Stomach (tissue), 19 donors: ENCODE measurements at regions of chr10 and their contacts with region 1.

Region 1: DNA sequence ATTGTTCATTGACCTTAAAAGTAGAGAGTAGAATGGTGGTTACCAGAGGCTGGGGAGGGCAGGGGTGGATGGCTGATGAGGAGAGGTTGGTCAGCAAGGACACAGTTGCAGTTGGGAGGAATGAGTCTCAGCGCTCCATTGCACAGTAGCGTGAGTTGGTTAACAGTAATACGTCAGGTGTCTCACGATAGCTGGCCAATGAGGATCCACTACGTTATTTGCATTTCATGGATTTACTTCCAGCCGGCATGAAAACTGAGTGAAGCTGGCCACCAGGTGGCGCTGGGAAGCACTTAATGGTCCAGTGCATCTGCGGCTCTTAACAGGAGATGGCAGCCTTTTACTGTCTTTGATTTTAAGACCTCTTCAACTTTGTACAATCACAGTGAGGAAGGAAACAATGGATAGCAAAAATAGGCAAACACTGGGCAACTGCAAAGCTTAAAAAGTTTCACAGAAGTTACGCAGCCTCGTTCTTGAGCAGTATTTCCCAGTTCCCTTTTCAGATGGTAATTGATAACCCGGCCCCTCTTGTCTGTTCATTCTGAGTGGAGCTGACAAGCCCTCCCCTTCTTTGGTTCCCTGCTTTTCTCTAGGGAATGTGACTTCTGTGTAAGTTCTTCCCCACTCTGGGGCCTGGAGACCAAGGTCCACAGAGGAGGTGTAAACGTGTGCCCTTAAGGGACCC is 23.7 kb downstream of the AKR1E2 start:
- DNase-seq: peak; percentile 96 to 97
- H3K4me3 ChIP-seq: no peak overlapping the region
- H3K27ac ChIP-seq: peak overlapping the region; percentile 39 to 82 (median 72)
- H3K4me1 ChIP-seq: peaks cover 16 to 48% (median 33%) of the 10 kb centered on the region in 4 donors
- H3K27me3 ChIP-seq: no peaks in the 10 kb centered on the region
- CTCF ChIP-seq: peak in 6 of 7 experiments; percentile 91 to 100 (median 97)
- EP300 ChIP-seq: no peak
- POLR2A ChIP-seq: peak in 1 of 4 donors; percentile 11

Region 2: GRCh38 chr10:5081091-5081490 is 231.4 kb after region 1 on chr10:
- intact Hi-C with region 1: no loop called
- DNase-seq: peak in 1 of 2 donors; percentile 18
- H3K4me3 ChIP-seq: no peak overlapping the region
- H3K27ac ChIP-seq: no peak overlapping the region
- H3K4me1 ChIP-seq: peaks cover 0 to 19% (median 7%) of the 10 kb centered on the region in 4 donors
- H3K27me3 ChIP-seq: no peaks in the 10 kb centered on the region
- CTCF ChIP-seq: no peak
- EP300 ChIP-seq: no peak
- POLR2A ChIP-seq: no peak

Region 3: DNA sequence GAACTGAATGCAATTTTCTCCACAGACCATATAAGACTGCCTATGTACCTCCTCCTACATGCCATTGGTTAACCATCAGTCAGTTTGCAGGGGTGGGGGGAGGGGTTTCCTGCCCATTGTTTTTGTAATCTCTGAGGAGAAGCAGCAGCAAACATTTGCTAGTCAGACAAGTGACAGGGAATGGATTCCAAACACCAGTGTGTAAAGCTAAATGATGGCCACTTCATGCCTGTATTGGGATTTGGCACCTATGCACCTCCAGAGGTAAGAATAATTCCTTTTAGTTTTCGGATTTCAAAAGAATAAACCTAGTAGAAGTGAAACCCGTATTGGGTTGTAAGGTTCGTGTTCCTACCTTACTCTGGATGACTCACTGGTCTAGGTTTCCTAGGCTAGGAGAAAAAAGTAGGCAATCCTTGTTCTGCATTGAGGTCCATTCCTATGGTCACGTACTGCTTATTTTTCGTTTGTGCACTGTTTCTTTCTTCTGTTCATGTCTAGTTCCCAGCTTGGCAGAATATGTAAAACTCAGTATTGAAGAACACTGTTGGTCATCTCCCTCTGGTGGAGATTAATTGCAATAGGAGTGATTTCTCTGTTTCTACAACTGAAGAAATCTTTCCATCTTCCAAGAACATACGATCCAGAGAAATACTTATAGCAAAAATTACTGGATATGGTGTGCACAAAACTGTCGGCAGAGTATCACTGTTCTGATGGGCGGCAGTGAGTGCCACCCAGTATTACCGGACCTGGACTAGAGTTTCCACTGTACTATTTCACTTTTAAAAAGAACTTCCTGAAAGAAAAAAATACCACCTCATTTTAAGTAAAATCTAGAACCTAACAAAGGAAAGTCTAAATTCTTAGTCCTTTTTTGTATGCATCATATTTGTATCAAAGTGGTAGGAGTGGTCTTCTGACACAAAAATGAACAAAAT is 244.8 kb after region 1 on chr10 and contains the start of gene AKR1C3:
- intact Hi-C with region 1: loop called (anchors 10 kb)
- DNase-seq: peak in 1 of 2 donors; percentile 64
- H3K4me3 ChIP-seq: peak within 1 kb of the TSS; percentile 44 to 53 (median 48)
- H3K27ac ChIP-seq: peak within 1 kb of the TSS; percentile 75 to 88 (median 82)
- H3K4me1 ChIP-seq: peaks cover 0 to 11% (median 5%) of the 10 kb centered on the region in 4 donors
- H3K27me3 ChIP-seq: no peaks in the 10 kb centered on the region
- CTCF ChIP-seq: peak in 5 of 7 experiments; percentile 53 to 86 (median 71)
- EP300 ChIP-seq: no peak
- POLR2A ChIP-seq: no peak
- total RNA-seq, gene AKR1C3: 28.1 to 228 (median 191) TPM